Posterior vena cava (tissue), 2 donors: ENCODE measurements at regions of chr5 and their contacts with region 1.

Region 1: GRCh38 chr5:16855485-16855884 is 80.6 kb downstream of the MYO10 start:
- DNase-seq: no peak

Region 2: DNA sequence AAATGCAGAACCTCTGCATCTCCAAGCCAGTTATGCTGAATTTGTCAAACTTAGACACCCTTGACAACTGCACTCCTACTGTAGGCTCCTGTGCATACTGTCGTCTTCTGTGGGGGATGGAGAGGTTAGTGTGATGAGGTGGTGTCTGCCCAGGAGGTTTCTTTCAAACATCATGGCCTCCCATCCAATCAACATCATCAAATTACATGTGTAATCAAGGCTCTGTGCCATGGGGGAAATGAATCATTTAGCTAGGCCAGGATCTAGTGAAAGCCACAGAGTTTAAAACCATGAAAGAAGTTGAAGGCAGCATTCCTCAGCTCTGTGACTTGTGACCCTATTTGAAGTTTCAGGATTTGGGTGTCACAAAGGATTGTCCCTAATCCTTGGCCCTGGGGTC is 916.5 kb before region 1 on chr5:
- intact Hi-C with region 1: no loop called
- DNase-seq: no peak

Region 3: GRCh38 chr5:16791036-16791705 is 64.3 kb before region 1 on chr5:
- intact Hi-C with region 1: loop called in 1 of 2 experiments (anchors 2 kb)
- DNase-seq: no peak

Region 4: GRCh38 chr5:16806711-16807546 is 48.6 kb before region 1 on chr5:
- intact Hi-C with region 1: loop called in 1 of 2 experiments (anchors 1 kb)
- DNase-seq: no peak

Region 5: DNA sequence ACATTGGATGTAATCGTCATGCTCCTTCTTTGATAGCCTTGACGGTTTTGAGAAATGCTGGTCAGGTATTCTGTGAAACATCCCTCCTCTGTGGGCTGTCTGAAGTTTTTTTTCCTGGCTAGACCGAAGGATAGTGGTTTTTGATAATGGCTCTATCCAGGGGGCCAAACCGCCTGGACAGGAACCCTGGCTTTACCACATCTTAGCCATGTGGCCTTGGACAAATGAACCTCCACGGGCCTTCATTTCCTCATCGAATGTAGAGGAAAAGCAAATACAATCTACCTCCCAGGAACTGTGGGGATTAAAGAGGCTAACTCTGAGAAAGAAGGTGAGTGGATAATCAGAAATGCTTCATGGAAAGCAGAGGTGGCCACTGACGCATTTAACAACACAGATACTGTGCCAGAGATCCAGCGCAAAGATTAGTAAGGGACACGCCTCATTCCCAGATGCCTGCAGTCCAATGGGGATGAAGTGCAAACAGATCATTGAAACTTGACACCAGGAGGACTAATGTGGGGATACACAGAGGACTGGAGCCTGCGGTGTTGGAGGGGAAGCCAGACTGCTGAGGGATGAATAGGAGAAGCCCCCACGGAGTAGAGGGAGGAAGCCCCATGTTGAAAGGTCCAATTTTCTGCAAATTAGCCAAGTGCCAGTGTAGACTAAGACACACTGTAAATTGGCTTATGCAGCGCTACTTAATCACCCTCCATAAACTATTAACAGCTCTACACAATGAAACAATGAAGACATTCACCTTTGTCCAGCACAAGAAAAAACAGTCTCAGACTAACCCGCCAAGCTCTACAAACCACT is 39.0 kb after region 1 on chr5:
- intact Hi-C with region 1: no loop called
- DNase-seq: no peak

Region 6: GRCh38 chr5:18078157-18078556 is 1222.7 kb after region 1 on chr5:
- intact Hi-C with region 1: loop called in 1 of 2 experiments (anchors 5 kb)
- DNase-seq: no peak